ENCODE measurements at regions of chr16 and their contacts with region 1.

Region 1: GRCh38 chr16:70331588-70332358 is 14.9 kb upstream of the DDX19A start:
- DNase-seq: peak in 5 of 9 donors; percentile 5 to 24 (median 16)
- ATAC-seq: peak; percentile 63
- H3K4me3 ChIP-seq: no peak overlapping the region
- H3K4me3 Mint-ChIP-seq: no peak overlapping the region
- H3K27ac ChIP-seq: no peak overlapping the region
- H3K27ac Mint-ChIP-seq: peak overlapping the region in 4 of 9 donors; percentile 52 to 72 (median 56)
- H3K4me1 ChIP-seq: no peaks in the 10 kb centered on the region
- H3K4me1 Mint-ChIP-seq: no peaks in the 10 kb centered on the region
- H3K27me3 ChIP-seq: no peaks in the 10 kb centered on the region
- H3K27me3 Mint-ChIP-seq: no peaks in the 10 kb centered on the region

Region 2: DNA sequence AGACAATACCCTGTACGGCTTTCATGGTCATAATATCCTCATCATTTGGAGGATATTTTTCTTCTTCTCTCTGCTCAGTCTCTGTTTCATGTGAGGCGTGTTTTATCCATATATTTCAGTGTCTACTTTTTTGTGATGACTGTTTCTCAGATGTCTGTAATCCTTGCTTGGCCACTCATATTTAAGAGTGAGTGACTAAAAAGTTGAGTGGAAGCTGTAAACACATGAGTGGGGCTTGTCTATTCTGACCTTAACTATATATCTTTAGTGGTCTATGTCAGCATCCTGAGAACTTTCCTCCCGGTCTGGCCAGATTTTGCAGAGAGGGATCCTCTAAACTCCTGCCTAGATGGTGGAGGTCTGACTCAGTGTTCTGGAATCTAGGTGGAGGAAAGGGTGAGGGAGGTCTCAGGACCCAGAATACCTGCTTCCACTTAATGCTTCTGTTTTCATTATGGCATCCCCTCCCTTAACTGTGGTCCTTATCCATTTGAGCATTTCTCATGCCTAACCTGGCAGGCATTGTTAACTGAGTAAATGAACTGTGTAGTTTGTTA is 26.8 kb before region 1 on chr16:
- CTCF ChIA-PET with region 1: interaction called, 3 read pairs
- POLR2A ChIA-PET with region 1: no interaction called
- intact Hi-C with region 1: loop called in 1 of 2 experiments (anchors 1 kb)
- DNase-seq: no peak
- ATAC-seq: no peak
- H3K4me3 ChIP-seq: no peak overlapping the region
- H3K4me3 Mint-ChIP-seq: peak overlapping the region in 3 of 10 donors; percentile 22 to 38 (median 32)
- H3K27ac ChIP-seq: no peak overlapping the region
- H3K27ac Mint-ChIP-seq: peak overlapping the region in 8 of 9 donors; percentile 1 to 79 (median 37)
- H3K4me1 ChIP-seq: no peaks in the 10 kb centered on the region
- H3K4me1 Mint-ChIP-seq: peaks cover 27 to 56% (median 47%) of the 10 kb centered on the region in 7 donors
- H3K27me3 ChIP-seq: no peaks in the 10 kb centered on the region
- H3K27me3 Mint-ChIP-seq: no peaks in the 10 kb centered on the region